Panc1 (cell line): ENCODE measurements at regions of chr15 and their contacts with region 1.

Region 1: DNA sequence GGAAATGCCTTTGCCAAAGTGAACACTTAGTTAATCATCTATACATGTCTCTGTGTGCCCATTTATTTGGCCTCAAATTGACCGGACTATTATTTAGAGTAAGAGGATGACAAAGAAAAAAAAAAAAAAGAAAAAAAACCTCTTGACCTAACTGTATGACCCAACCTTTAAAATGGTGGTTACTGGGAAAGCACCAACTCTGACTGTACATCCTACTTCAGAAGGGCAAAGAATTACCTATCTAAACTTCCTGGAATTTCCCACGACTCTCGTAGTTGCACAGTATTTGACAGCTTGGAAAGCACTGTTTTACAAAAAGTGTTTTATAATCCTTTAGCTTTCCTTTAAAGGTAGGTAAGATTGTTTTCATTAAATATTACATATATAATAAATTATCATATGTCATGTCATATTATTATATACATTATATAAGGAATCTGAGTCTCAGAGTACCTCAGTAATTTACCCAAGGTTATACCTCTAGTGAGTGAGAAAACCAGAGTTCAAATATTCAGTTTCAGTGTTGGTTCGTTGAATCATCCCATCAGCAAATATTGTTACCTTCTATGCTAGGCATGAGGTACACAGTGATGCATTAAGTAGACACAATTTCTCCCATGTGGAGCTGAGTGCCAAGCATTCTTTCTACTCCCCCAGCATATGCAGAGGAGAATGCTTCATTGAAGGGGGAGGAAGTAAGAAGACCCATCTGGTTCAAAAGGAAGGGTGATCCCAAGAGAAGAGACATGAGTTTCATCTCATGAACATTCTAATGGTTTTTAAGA is 5.0 kb downstream of the BCL2A1 start:
- DNase-seq: peak; percentile 88
- ATAC-seq: peak; percentile 74
- H3K4me3 ChIP-seq: peak overlapping the region in 1 of 2 experiments; percentile 49; a peak in 2 of 4 replicates
- H3K27ac ChIP-seq: peak overlapping the region; percentile 71
- H3K4me1 ChIP-seq: peaks cover 28% of the 10 kb centered on the region
- H3K27me3 ChIP-seq: no peaks in the 10 kb centered on the region
- CTCF ChIP-seq: no peak

Region 2: GRCh38 chr15:78072080-78072892 is 1893.8 kb before region 1 on chr15:
- CTCF ChIA-PET with region 1: no interaction called
- POLR2A ChIA-PET with region 1: interaction called, 18 read pairs
- in situ Hi-C with region 1: no loop called
- intact Hi-C with region 1: no loop called
- DNase-seq: no peak
- ATAC-seq: no peak
- H3K4me3 ChIP-seq: peak overlapping the region in 1 of 2 experiments; percentile 37; a peak in 2 of 4 replicates
- H3K27ac ChIP-seq: peak overlapping the region; percentile 82
- H3K4me1 ChIP-seq: peaks cover 74% of the 10 kb centered on the region
- H3K27me3 ChIP-seq: no peaks in the 10 kb centered on the region
- CTCF ChIP-seq: no peak

Region 3: GRCh38 chr15:78552597-78552996 is 1413.4 kb before region 1 on chr15:
- CTCF ChIA-PET with region 1: no interaction called
- POLR2A ChIA-PET with region 1: interaction called, 11 read pairs
- in situ Hi-C with region 1: no loop called
- intact Hi-C with region 1: no loop called
- DNase-seq: no peak
- ATAC-seq: no peak
- H3K4me3 ChIP-seq: no peak overlapping the region
- H3K27ac ChIP-seq: no peak overlapping the region
- H3K4me1 ChIP-seq: no peaks in the 10 kb centered on the region
- H3K27me3 ChIP-seq: no peaks in the 10 kb centered on the region
- CTCF ChIP-seq: no peak

Region 4: DNA sequence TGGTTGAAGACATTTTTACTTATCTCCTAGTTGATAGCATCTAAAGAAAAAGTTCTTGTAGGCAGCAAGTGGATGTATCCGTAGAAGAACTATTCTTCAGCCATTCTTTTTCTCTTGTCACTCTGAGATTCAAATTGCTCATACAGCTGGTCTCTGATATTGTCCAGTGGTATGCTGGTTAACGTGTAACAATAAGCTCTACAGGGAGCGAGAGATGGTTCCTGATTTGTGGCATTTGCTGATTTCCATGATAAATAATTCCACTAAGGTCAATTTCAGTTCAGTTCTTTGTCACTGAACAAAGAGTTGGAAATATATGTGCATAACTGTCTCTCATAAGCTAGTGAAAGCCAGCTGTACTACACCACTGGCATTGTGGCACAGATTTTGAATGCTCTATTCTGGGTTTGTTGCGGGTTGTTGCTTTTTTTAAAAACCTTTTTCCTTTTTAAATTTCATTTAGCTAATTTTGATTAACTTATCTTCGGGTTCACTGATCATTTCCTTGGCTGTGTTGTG is 201.0 kb before region 1 on chr15:
- CTCF ChIA-PET with region 1: no interaction called
- POLR2A ChIA-PET with region 1: no interaction called
- in situ Hi-C with region 1: no loop called
- intact Hi-C with region 1: no loop called
- DNase-seq: no peak
- ATAC-seq: no peak
- H3K4me3 ChIP-seq: no peak overlapping the region
- H3K27ac ChIP-seq: no peak overlapping the region
- H3K4me1 ChIP-seq: no peaks in the 10 kb centered on the region
- H3K27me3 ChIP-seq: peaks cover 16% of the 10 kb centered on the region; the same call in 1 of the 2 replicates
- CTCF ChIP-seq: no peak

Region 5: GRCh38 chr15:79923515-79924395 is 42.3 kb before region 1 on chr15:
- CTCF ChIA-PET with region 1: interaction called, 5 read pairs
- POLR2A ChIA-PET with region 1: interaction called, 8 read pairs
- in situ Hi-C with region 1: no loop called
- intact Hi-C with region 1: loop called (anchors 5 kb)
- DNase-seq: peak; percentile 92
- ATAC-seq: peak; percentile 97
- H3K4me3 ChIP-seq: peak overlapping the region; percentile 97
- H3K27ac ChIP-seq: peak overlapping the region; percentile 92
- H3K4me1 ChIP-seq: 0 out of 2 replicates have a peak, but pooled peaks cover 3% of the 10 kb centered on the region
- H3K27me3 ChIP-seq: no peaks in the 10 kb centered on the region
- CTCF ChIP-seq: no peak

Region 6: GRCh38 chr15:80031841-80032240 is 65.8 kb after region 1 on chr15:
- CTCF ChIA-PET with region 1: no interaction called
- POLR2A ChIA-PET with region 1: no interaction called
- in situ Hi-C with region 1: no loop called
- intact Hi-C with region 1: no loop called
- DNase-seq: no peak
- ATAC-seq: no peak
- H3K4me3 ChIP-seq: no peak overlapping the region
- H3K27ac ChIP-seq: peak overlapping the region; percentile 36
- H3K4me1 ChIP-seq: peaks cover 19% of the 10 kb centered on the region
- H3K27me3 ChIP-seq: no peaks in the 10 kb centered on the region
- CTCF ChIP-seq: no peak